ENCODE measurements at regions of chr10 and their contacts with region 1.

Region 1: DNA sequence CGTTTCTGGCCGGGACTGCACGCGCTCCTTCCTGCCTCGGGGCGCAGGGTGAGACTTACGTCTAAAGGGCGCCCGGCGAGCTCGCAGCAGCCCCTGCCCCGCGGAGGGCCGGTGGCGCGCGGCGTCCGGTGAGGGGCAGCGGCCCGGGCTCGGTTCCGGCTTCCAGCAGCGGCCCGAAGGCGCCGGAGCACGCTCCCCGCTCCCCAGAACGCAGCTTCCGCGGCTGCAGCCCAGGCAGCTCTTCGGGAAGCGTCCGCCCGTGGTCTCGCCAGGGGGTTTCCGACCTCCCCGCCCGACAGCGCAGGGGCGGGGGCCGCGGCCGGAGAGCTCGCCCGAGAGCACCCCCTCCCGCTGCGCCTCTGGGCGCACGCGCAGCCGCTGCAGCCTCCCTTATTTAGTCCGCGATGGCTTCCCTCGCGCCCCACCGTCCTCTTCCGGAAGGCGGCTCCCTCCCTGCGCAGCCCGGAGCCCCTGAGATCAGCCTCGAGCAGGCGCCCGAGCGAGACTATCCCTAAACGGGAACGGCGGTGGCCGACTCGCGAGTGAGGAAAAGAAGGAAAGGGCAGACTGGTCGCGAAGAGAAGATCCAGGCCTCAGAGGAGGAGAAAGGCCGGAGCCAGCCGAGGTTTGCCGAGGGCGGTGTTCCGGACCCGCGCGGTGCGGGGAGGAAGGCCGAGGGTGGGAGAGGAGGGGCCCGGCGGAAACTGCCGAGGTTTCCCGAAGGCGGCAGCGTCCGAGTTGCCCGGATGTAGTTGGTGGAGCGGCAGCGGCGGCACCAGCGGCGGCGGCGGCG is at the start of gene WAC:
- DNase-seq: peak; percentile 97
- H3K4me3 ChIP-seq: peak within 1 kb of the TSS; percentile 76
- H3K27ac ChIP-seq: peak within 1 kb of the TSS; percentile 99
- H3K4me1 ChIP-seq: peaks cover 22% of the 10 kb centered on the region
- H3K27me3 ChIP-seq: no peaks in the 10 kb centered on the region
- CTCF ChIP-seq: no peak
- total RNA-seq, gene WAC: 125 and 130 TPM in 2 replicates

Region 2: DNA sequence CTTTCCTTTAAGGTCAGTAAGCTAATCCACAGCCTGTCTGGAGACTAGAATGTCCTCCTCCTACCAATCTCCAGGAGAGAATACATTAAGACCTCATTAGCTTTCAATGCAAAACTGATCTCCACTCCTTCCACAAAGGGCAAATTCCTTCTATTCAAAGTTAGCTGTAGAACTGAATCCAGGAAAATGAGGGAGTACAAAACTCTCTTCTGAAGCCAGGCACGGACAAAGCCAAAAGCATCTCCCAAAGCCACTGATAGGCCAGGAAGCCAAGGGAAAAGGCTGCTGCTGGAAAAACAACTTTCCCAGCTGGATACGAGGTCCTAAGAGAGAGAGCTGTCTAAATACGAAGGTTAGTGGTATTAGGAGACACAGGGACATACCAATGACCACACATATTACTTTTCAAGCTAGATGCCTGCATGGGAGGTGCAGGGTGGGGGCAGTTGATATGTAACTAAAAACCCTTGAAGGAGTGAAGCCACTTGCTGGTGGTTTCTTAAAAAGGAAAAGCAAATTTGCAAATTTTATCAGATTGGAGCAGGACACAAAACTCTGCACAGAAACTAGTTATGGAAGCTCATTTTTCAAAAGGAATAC is 830.5 kb before region 1 on chr10:
- CTCF ChIA-PET with region 1: no interaction called
- POLR2A ChIA-PET with region 1: no interaction called
- intact Hi-C with region 1: no loop called
- DNase-seq: no peak
- H3K4me3 ChIP-seq: no peak overlapping the region
- H3K27ac ChIP-seq: no peak overlapping the region
- H3K4me1 ChIP-seq: no peaks in the 10 kb centered on the region
- H3K27me3 ChIP-seq: no peaks in the 10 kb centered on the region
- CTCF ChIP-seq: no peak

Region 3: DNA sequence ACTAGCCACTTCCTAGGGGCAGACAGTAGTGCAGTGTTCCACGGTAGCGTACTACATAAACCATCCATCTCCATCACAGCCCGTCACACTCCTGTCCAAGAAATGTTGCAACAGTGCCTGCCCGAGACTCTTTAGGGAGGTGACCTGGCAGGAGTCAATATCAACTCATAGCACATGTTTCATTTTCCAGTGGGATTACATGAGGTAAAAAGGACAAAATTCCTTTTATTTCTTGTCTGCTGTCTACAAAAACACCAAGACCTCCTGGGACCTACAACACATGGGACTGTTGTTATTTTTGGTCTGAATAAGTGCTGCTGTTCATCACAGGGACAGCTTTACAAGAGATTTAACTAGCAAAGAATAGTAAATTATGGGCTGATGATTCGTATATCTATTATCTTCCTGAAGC is 329.6 kb before region 1 on chr10:
- CTCF ChIA-PET with region 1: no interaction called
- POLR2A ChIA-PET with region 1: no interaction called
- intact Hi-C with region 1: no loop called
- DNase-seq: no peak
- H3K4me3 ChIP-seq: no peak overlapping the region
- H3K27ac ChIP-seq: no peak overlapping the region
- H3K4me1 ChIP-seq: no peaks in the 10 kb centered on the region
- H3K27me3 ChIP-seq: no peaks in the 10 kb centered on the region
- CTCF ChIP-seq: no peak

Region 4: GRCh38 chr10:28432210-28432676 is 100.3 kb before region 1 on chr10:
- CTCF ChIA-PET with region 1: no interaction called
- POLR2A ChIA-PET with region 1: no interaction called
- intact Hi-C with region 1: loop called (anchors 5 kb)
- DNase-seq: peak; percentile 79
- H3K4me3 ChIP-seq: no peak overlapping the region
- H3K27ac ChIP-seq: no peak overlapping the region
- H3K4me1 ChIP-seq: no peaks in the 10 kb centered on the region
- H3K27me3 ChIP-seq: no peaks in the 10 kb centered on the region
- CTCF ChIP-seq: peak; percentile 85

Region 5: DNA sequence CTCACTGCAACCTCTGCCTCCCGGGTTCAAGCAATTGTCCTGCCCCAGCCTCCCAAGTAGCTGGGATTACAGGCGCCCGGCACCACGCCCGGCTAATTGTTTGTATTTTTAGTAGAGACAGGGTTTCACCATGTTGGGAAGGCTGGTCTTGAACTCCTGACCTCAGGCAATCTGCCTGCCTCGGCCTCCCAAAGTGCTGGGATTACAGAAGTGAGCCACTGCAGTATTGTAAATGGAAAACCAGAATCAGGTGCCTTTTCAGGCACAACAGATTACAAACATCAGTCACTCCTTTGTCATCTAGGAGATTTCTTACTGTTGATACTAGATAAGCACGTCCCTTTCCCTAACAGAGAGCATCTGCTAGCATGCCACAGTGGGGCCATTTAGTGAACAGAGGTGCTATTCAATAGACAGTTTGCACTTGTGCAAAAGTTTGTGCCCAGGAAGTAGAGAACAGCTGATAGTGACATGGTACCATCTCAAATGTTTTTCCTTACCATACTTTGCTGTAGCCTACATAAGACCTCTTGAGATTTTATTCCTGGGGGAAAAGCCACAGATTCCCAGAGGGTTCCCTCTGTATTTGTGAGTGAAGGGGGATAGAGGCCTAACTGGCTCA is 24.2 kb before region 1 on chr10:
- CTCF ChIA-PET with region 1: interaction called, 11 read pairs
- POLR2A ChIA-PET with region 1: no interaction called
- intact Hi-C with region 1: no loop called
- DNase-seq: no peak
- H3K4me3 ChIP-seq: no peak overlapping the region
- H3K27ac ChIP-seq: no peak overlapping the region
- H3K4me1 ChIP-seq: no peaks in the 10 kb centered on the region
- H3K27me3 ChIP-seq: no peaks in the 10 kb centered on the region
- CTCF ChIP-seq: no peak